ENCODE measurements at regions of chr11 and their contacts with region 1.

Region 1: DNA sequence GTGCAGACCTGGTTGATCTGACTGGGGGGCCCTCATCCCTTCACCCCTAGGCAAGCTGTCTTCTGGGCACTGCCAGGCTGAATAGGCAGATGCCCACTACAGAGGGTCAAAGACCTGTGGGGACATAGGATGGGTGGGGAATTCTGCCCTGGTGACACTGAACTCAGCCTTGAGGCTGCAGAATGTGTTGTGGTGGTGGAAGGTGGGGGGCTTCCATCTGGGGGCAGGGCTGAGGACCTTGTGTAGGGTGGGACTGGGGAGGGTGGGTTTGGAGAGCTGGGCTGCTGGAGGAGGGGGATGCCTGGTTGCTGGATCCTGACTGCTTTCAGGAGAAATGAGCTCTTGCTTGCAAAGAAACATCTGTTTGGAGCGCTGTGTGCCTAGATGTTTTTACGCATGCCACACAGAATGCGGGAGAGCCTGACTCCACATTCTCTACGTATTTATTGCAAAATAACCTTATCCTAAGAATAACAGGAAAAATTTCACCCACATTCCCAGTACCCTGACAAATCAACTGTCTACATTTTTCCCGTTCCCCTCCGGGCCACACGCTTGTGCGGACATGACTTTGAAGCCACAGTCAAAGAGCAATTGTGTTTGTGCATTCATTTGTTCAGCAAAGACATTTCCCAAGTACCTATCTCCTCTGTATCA is 18.3 kb downstream of the SMIM38 start:
- DNase-seq: peak; percentile 90
- H3K4me3 ChIP-seq: no peak overlapping the region
- H3K27ac ChIP-seq: peak overlapping the region; percentile 23
- H3K4me1 ChIP-seq: peaks cover 37% of the 10 kb centered on the region
- H3K27me3 ChIP-seq: no peaks in the 10 kb centered on the region
- CTCF ChIP-seq: no peak

Region 2: DNA sequence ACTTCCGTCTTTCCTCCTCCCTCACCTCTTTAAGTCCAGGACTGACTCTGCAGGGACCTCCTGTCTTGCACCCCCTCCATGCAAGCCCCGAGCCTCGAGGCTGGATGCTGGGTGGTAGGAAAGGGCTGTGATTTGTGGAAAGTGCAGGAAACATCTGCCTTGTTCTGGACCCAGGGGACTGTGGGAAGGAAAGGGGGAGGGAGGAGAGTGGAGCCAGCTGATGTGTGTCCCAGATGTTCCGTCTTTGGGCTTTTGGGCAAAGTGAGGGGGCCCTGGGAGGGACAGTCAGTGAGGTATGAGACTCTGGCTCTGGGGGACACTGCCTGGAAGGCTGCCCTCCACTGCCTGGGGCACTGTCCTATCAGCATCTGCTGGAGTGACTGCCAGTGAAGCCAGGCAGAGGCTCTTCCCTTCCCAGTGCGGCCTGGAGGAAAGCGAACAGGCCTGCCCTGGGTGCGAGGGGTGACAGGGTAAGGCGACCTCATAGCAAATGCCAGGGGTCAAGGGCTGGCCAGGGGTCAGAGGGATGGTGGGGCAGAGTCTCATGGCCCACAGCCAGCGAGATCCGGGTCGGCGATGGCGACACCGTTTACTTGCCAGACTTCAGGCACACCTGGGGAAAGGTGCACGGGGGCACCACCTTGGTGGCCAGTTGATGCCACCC is 195.0 kb before region 1 on chr11:
- CTCF ChIA-PET with region 1: no interaction called
- dilution Hi-C with region 1: no loop called
- in situ Hi-C with region 1: no loop called
- intact Hi-C with region 1: no loop called
- DNase-seq: no peak
- H3K4me3 ChIP-seq: no peak overlapping the region
- H3K27ac ChIP-seq: no peak overlapping the region
- H3K4me1 ChIP-seq: no peaks in the 10 kb centered on the region
- H3K27me3 ChIP-seq: no peaks in the 10 kb centered on the region
- CTCF ChIP-seq: no peak

Region 3: GRCh38 chr11:69157156-69157821 is 16.8 kb before region 1 on chr11:
- CTCF ChIA-PET with region 1: no interaction called
- dilution Hi-C with region 1: no loop called
- in situ Hi-C with region 1: no loop called
- intact Hi-C with region 1: no loop called
- DNase-seq: peak; percentile 49
- H3K4me3 ChIP-seq: no peak overlapping the region
- H3K27ac ChIP-seq: no peak overlapping the region
- H3K4me1 ChIP-seq: peaks cover 14% of the 10 kb centered on the region
- H3K27me3 ChIP-seq: no peaks in the 10 kb centered on the region
- CTCF ChIP-seq: no peak

Region 4: GRCh38 chr11:69274531-69275255 is 100.6 kb after region 1 on chr11:
- CTCF ChIA-PET with region 1: no interaction called
- dilution Hi-C with region 1: no loop called
- in situ Hi-C with region 1: no loop called
- intact Hi-C with region 1: no loop called
- DNase-seq: peak; percentile 94
- H3K4me3 ChIP-seq: no peak overlapping the region
- H3K27ac ChIP-seq: peak overlapping the region; percentile 54
- H3K4me1 ChIP-seq: peaks cover 15% of the 10 kb centered on the region
- H3K27me3 ChIP-seq: no peaks in the 10 kb centered on the region
- CTCF ChIP-seq: no peak

Region 5: DNA sequence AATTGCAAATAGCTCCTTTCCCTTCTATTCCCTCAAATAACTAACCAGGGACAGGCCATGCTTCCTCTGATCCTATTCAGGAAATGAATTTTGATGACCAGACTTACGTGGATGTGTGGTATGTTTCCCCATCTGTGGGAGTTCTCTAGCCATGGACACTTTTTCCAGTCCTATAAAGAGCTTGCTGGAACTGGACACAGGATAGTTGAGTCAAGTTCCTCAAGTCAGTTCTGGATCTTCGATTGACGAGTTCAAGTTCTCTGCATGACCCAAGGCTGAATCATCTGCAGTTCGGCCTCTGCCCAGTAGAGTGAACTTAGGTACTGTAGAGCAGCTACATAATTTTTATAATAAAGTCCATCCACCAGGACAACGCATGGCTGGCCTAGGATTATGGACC is 414.2 kb after region 1 on chr11:
- CTCF ChIA-PET with region 1: no interaction called
- dilution Hi-C with region 1: no loop called
- in situ Hi-C with region 1: no loop called
- intact Hi-C with region 1: loop called (anchors 1 kb)
- DNase-seq: peak; percentile 83
- H3K4me3 ChIP-seq: no peak overlapping the region
- H3K27ac ChIP-seq: peak overlapping the region; percentile 83
- H3K4me1 ChIP-seq: peaks cover 18% of the 10 kb centered on the region
- H3K27me3 ChIP-seq: no peaks in the 10 kb centered on the region
- CTCF ChIP-seq: peak; percentile 51 to 70

Measured in mammary epithelial cell (primary cell).